IMR-90 (cell line): ENCODE measurements at regions of chr4 and their contacts with region 1.

Region 1: DNA sequence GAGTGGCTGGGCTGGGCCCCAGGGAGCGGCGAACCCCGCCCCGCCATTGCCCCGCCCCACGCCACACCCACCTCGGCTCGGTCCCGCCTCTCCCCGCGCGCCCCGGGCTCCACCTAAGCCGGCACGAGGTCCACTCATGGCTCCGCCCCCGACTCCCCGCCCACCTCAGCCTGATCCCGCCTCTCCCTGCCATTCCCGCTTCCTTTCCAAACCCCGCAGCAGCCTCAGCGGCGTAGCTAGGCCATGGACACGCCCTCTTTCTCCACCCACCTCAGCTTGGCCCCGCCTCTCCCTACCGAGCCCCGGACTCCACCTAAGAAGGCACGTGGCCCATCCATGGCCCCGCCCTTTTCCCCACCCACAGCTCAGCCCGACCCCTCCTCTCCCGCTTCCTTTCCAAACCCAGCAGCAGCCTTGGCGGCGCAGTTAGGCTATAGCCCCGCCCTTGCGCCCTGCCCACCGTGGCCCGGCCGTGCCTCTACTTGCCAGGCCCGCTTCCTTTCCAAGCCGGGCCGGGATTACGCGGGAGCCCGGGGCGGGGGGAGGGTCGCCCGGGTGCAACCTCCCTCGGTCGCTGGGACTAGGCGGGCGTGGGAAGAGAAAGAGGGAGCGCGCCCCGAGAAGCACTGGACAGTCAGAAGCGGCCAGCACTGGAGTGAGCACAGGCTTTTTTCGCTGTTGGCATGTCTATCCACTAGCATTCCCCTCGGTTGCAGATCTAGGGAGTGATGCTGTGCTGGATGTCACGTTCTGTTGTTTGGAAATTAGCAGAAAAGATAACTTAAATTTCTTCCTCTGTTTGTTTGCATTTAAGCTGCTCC is at the start of gene RELL1:
- DNase-seq: peak; percentile 99
- ATAC-seq: peak; percentile 92
- H3K4me3 ChIP-seq: peak within 1 kb of the TSS; percentile 86
- H3K27ac ChIP-seq: peak within 1 kb of the TSS; percentile 72
- H3K4me1 ChIP-seq: peaks cover 9% of the 10 kb centered on the region
- H3K27me3 ChIP-seq: no peaks in the 10 kb centered on the region
- CTCF ChIP-seq: no peak
- POLR2A ChIP-seq: no peak
- RAD21 ChIP-seq: 0 out of 2 replicates have a peak, but pooled peaks have one; percentile 9
- total RNA-seq, gene RELL1: 39.6 and 53.6 TPM in 2 replicates

Region 2: GRCh38 chr4:37648096-37648817 is 38.3 kb before region 1 on chr4:
- CTCF ChIA-PET with region 1: no interaction called
- POLR2A ChIA-PET with region 1: no interaction called
- dilution Hi-C with region 1: no loop called
- in situ Hi-C with region 1: no loop called
- intact Hi-C with region 1: loop called (anchors 2 kb)
- DNase-seq: peak; percentile 96
- ATAC-seq: peak; percentile 91
- H3K4me3 ChIP-seq: no peak overlapping the region
- H3K27ac ChIP-seq: peak overlapping the region; percentile 18; the same call in 1 of the 2 replicates
- H3K4me1 ChIP-seq: peaks cover 7% of the 10 kb centered on the region
- H3K27me3 ChIP-seq: no peaks in the 10 kb centered on the region
- CTCF ChIP-seq: no peak
- POLR2A ChIP-seq: no peak
- RAD21 ChIP-seq: peak; percentile 4; the same call in 1 of the 2 replicates

Region 3: DNA sequence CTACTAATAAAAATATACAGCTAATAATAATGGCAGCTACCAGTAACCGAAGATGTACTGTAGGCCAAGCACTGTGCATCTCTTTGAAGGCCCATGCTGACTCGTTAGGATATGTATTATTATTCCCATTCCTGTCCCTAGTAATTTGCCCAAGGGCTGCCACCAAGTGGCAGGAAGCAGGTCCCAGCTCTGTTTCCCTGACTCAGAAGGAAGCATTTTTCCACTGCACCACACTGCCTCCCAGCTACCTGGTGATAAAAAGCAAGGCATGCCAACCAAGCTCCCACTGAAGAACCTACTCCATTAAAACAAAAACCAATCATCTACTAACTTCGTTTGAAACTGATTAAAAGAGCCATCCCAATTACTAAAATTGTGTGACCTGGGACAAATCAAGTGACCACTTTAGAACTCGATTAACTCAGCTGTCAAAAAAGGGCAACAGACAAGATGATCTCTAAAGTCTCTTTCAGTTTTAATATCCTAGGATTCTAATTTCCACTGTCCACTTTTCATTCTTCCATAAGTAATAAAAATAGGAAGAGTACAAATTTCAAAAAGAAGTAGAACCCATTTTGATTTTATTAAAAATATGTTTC is 115.6 kb after region 1 on chr4:
- CTCF ChIA-PET with region 1: no interaction called
- POLR2A ChIA-PET with region 1: no interaction called
- dilution Hi-C with region 1: no loop called
- in situ Hi-C with region 1: no loop called
- intact Hi-C with region 1: loop called (anchors 5 kb)
- DNase-seq: peak; percentile 60
- ATAC-seq: peak; percentile 87
- H3K4me3 ChIP-seq: no peak overlapping the region
- H3K27ac ChIP-seq: no peak overlapping the region
- H3K4me1 ChIP-seq: no peaks in the 10 kb centered on the region
- H3K27me3 ChIP-seq: peaks cover 7% of the 10 kb centered on the region
- CTCF ChIP-seq: peak; percentile 73
- POLR2A ChIP-seq: no peak
- RAD21 ChIP-seq: peak; percentile 70

Region 4: DNA sequence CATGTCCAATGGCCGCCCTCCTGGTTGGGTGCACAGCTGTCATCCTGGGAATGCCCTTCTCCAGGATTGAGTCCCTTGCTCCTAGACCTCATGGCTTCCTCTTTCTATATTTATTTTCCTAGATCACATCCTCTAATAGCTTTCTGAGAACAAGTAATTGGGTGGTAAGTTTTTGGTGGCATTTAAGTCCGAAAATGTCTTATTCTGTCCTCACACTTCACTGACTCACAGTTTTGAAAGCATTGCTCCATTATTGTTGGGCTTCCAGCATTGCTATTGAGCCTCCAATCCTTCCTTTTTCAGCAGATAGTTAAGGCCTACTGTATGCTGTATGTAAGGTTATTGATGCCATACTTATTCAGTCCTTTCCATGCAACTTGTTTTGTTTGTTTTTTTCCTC is 165.8 kb after region 1 on chr4:
- CTCF ChIA-PET with region 1: no interaction called
- POLR2A ChIA-PET with region 1: no interaction called
- dilution Hi-C with region 1: no loop called
- in situ Hi-C with region 1: no loop called
- intact Hi-C with region 1: no loop called
- DNase-seq: no peak
- ATAC-seq: no peak
- H3K4me3 ChIP-seq: no peak overlapping the region
- H3K27ac ChIP-seq: no peak overlapping the region
- H3K4me1 ChIP-seq: no peaks in the 10 kb centered on the region
- H3K27me3 ChIP-seq: no peaks in the 10 kb centered on the region
- CTCF ChIP-seq: no peak
- POLR2A ChIP-seq: no peak
- RAD21 ChIP-seq: no peak